Breast epithelium (tissue), 4 donors: ENCODE measurements at regions of chr4 and their contacts with region 1.

Region 1: DNA sequence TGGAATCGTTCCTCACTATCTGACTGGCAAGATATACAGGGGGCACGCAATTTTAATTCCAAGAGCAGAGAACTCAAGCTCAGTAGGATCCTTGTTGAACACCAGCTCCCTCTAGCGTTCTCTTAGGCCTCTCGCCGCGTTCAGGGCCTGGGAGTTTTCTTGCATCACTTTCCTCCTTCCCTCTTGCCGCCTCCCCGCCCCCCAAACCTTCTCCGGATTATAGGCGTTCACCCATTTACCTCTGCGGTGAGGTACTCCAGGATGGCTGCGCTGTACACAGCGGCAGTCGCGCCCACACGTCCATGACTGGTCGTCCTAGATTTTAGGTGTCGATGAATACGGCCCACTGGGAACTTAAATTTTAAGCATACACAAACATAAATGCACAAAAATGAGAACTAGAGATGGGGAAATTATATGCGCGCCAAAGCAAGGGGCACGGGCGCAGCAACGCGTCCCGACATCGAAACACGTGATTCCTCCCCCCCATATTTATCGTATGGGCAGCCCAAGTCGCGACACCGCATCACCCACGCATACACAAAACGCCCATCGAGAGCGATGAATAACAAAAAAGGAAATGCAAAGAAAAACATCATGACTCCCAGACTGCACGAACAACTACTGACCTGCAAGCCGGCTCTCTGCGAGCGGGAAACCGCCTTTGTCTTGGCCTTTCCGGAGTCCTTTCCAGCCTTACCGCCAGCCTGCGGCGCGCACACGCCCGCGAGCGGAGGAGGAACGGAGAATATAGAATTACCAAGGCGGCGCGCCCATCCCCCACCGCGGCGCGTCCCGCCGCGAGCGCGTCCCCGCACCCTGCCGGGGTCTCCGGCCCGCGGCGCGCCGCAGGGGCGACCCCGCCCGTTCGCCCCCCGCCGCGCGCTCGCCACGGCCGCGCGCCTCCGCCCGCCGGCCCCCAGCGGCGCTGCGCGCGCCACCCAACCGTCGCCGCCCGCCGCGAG is 759 bp downstream of the H2AZ1 start:
- DNase-seq: peak; percentile 87 to 88
- H3K4me3 ChIP-seq: peak overlapping the region; percentile 77 to 84 (median 77)
- H3K27ac ChIP-seq: peak overlapping the region; percentile 94
- H3K4me1 ChIP-seq: no peaks in the 10 kb centered on the region
- H3K27me3 ChIP-seq: no peaks in the 10 kb centered on the region
- CTCF ChIP-seq: peak; percentile 62 to 86 (median 80)
- POLR2A ChIP-seq: no peak

Region 2: DNA sequence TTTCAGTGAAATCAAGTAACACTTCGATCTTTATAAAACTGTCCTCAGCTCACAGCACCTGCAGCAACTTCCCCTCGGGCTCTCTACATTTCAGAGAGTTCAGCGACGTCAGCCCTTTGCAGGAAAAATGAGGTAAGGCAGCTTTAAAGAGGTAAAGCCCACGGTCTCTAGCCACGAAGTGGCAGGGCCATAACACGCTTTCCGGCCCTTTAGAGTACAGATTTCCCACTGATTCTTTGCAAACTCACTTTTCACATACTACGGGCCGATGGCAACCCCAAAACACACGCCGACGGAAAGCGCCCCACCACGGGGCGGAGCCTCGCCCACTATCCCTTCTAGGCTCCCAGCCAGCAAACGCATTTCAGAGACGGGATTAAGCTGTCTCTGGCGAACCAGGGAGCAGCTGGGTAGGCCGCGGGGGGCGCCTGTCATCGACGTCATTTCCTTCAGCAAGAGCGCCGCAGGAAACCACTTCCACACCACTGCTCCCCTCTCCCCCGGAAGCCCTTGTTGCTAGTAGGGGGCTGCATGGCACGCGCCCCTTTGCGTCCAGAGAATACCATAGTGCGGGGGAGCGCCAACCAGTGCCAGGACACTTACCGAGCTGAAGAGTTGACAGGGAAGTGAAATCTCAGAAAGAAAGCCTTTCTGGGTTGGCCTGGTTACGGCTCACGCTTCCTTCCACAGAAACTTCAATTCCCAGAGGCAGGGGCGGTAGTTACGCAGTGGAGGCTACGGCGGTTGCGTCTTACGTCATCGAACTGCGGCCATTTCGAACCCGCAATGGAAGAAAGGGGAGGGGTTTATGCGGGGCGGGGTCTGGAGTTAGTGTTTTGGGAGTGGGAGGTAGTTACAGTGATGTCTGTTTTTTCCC is 385.8 kb before region 1 on chr4 and contains the start of gene TRMT10A:
- intact Hi-C with region 1: loop called (anchors 5 kb)
- DNase-seq: peak; percentile 95 to 97
- H3K4me3 ChIP-seq: peak within 1 kb of the TSS; percentile 56 to 68 (median 67)
- H3K27ac ChIP-seq: peak within 1 kb of the TSS; percentile 94 to 97
- H3K4me1 ChIP-seq: no peaks in the 10 kb centered on the region
- H3K27me3 ChIP-seq: no peaks in the 10 kb centered on the region
- CTCF ChIP-seq: peak in 2 of 3 donors; percentile 8
- POLR2A ChIP-seq: peak; percentile 60
- total RNA-seq, gene TRMT10A: 5.2 to 7.8 (median 7.2) TPM

Region 3: GRCh38 chr4:100707786-100708185 is 758.5 kb after region 1 on chr4:
- intact Hi-C with region 1: no loop called
- DNase-seq: no peak
- H3K4me3 ChIP-seq: no peak overlapping the region
- H3K27ac ChIP-seq: no peak overlapping the region
- H3K4me1 ChIP-seq: no peaks in the 10 kb centered on the region
- H3K27me3 ChIP-seq: no peaks in the 10 kb centered on the region
- CTCF ChIP-seq: no peak
- POLR2A ChIP-seq: no peak